ENCODE measurements at regions of chr15 and their contacts with region 1.

Region 1: DNA sequence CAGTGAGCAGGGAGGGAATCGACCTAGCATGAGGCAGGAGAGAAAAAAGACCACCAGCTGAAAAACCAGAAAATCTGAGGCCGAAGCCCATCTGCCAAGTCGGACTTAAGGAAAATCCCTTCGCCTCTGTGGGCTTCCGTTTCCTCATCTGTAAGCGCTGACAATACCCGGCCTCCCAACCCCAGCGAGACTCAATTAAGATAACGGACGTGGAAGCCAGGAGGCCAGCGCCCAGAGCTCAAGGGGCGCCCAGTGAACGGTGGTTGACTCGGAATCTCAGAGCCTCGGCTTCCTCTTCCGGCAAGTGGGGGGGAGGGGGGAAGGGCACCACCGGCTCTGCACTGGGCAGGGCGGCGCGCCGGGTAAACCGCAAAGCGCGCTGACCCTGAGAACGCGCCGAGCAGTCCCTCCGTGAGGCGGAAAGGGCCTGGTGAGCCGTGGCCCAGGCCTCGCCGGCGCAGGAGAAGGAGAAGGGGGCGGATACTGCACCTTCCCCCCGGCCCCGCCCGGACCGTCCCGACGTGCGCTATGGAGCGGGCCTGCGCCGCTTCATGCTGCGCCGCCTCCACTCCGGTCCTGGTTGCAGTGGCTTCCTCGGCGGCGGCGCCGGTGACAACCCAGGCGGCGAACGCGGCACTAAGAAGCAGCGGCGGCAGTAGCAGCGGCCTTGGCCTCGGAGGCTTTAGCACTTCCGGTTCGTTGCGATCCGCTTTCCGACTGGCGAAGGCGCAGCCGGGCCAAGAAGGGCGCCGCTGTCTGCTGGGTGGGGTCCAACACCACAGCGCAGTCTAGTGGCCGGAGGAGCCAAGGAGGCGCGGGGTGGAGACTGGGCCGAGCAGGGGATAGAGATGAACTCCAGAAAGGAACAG is at the start of gene DPP8:
- H3K4me3 ChIP-seq: peak within 1 kb of the TSS; percentile 99
- H3K27ac ChIP-seq: peak within 1 kb of the TSS; percentile 90
- H3K4me1 ChIP-seq: peaks cover 18% of the 10 kb centered on the region
- CTCF ChIP-seq: peak; percentile 100

Region 2: GRCh38 chr15:65530314-65531122 is 13.3 kb after region 1 on chr15 and contains the start of gene HACD3:
- CTCF ChIA-PET with region 1: interaction called, 18 read pairs
- POLR2A ChIA-PET with region 1: interaction called, 37 read pairs
- H3K4me3 ChIP-seq: peak within 1 kb of the TSS; percentile 89
- H3K27ac ChIP-seq: peak within 1 kb of the TSS; percentile 99
- H3K4me1 ChIP-seq: peaks cover 30% of the 10 kb centered on the region
- CTCF ChIP-seq: peak; percentile 67

Measured in HEK293 (cell line).